Heart left ventricle (tissue), 16 donors: ENCODE measurements at regions of chr15 and their contacts with region 1.

Region 1: DNA sequence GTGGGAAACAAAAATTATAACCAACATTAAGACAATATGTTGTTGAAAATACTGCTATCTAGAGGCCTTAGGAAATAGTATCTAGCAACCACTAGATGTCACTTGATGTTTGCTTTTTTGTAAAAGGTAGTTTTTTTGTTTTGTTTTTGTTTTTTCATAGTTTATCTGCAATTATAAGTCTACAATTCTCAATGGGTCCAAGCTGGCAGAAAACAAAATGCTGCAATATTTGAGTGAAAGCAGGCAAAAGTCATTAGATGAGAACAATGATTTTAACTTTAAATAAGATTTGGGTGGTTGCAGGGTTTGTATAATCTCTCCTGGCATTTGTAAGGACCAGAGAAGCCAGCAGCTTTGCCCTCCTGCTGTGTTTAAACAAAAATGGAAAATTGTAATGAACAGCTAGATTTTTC is 27.0 kb downstream of the DUT start:
- DNase-seq: no peak
- ATAC-seq: peak in 1 of 4 donors; percentile 62
- H3K4me3 ChIP-seq: peak overlapping the region in 1 of 12 donors; percentile 3
- H3K27ac ChIP-seq: peak overlapping the region in 8 of 12 donors; percentile 3 to 53 (median 25)
- H3K4me1 ChIP-seq: peaks cover 0 to 20% (median 3%) of the 10 kb centered on the region in 12 donors
- H3K27me3 ChIP-seq: no peaks in the 10 kb centered on the region
- CTCF ChIP-seq: peak; percentile 38 to 75 (median 60)
- POLR2A ChIP-seq: no peak

Region 2: GRCh38 chr15:48221261-48221660 is 137.0 kb before region 1 on chr15:
- intact Hi-C with region 1: no loop called
- DNase-seq: no peak
- ATAC-seq: no peak
- H3K4me3 ChIP-seq: no peak overlapping the region
- H3K27ac ChIP-seq: no peak overlapping the region
- H3K4me1 ChIP-seq: no peaks in the 10 kb centered on the region
- H3K27me3 ChIP-seq: no peaks in the 10 kb centered on the region
- CTCF ChIP-seq: no peak
- POLR2A ChIP-seq: no peak

Region 3: GRCh38 chr15:48298914-48299313 is 59.3 kb before region 1 on chr15:
- intact Hi-C with region 1: no loop called
- DNase-seq: no peak
- ATAC-seq: no peak
- H3K4me3 ChIP-seq: no peak overlapping the region
- H3K27ac ChIP-seq: no peak overlapping the region
- H3K4me1 ChIP-seq: no peaks in the 10 kb centered on the region
- H3K27me3 ChIP-seq: no peaks in the 10 kb centered on the region
- CTCF ChIP-seq: no peak
- POLR2A ChIP-seq: no peak

Region 4: DNA sequence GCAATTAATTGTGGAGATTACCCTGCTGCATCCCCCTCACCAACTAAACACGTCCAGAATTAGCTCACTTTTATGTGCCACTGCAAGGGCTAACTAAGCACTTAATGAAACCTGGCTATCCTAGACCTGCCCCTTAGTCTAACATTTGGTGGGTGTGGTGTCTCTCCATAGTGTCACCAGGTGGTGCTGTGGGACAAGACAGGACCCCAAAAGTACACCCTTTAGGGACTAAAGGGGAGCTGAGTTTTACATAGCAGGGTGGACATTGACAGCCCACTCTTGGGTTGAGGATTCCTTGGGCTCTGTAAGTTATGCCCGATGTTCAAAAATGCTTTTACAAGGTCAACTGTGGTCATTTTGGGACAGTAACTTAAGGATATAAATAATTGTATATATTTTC is 21.3 kb before region 1 on chr15:
- intact Hi-C with region 1: no loop called
- DNase-seq: no peak
- ATAC-seq: no peak
- H3K4me3 ChIP-seq: no peak overlapping the region
- H3K27ac ChIP-seq: no peak overlapping the region
- H3K4me1 ChIP-seq: peaks cover 0 to 10% (median 7%) of the 10 kb centered on the region in 12 donors
- H3K27me3 ChIP-seq: no peaks in the 10 kb centered on the region
- CTCF ChIP-seq: peak in 5 of 12 donors; percentile 10 to 33 (median 24)
- POLR2A ChIP-seq: no peak

Region 5: GRCh38 chr15:48433226-48433886 is 75.1 kb after region 1 on chr15:
- intact Hi-C with region 1: no loop called
- DNase-seq: no peak
- ATAC-seq: no peak
- H3K4me3 ChIP-seq: no peak overlapping the region
- H3K27ac ChIP-seq: no peak overlapping the region
- H3K4me1 ChIP-seq: peaks cover 0 to 5% (median 0%) of the 10 kb centered on the region in 12 donors
- H3K27me3 ChIP-seq: no peaks in the 10 kb centered on the region
- CTCF ChIP-seq: no peak
- POLR2A ChIP-seq: no peak

Region 6: DNA sequence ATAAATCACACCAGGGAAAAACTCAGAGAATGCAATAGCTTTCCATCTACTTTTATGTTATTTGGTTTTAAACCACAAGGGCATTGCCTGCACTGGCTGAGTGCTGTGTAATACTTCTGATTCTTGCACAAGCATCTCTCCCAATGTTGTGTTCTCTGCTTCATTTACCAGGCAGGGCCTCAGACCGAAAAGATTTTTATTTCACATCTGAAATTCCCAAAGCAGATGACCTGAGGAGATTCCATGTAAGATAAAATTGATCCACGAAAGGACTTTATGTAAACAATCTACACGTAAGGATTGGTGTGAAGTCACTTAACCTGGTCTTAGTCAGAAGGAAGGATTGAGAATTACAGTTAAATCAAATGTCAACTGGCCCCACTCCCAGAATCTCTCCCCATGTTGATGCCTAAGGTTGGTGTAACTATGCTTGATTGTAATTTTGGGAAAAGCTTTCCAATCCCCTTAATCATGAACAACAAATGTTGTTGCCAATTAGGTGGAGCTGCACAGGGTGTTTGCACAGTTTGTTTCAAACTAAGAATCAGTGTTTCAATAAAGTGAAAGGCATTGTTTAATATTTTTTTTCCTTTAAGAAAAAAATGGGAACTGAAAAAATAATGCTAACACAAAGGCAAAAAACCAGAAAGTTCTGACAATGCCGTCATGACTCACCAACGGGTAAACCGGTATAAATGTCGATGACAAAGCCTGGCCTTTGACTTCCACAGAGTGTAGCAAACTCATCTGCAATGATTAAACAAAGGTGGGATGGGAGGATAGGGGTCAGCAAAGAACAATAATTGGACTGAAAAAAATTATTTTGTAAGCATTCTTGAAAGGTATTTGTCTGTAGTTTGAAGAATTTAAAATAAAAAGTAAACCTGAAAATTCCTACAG is 101.6 kb after region 1 on chr15:
- intact Hi-C with region 1: loop called in 1 of 10 experiments (anchors 10 kb)
- DNase-seq: no peak
- ATAC-seq: peak in 1 of 4 donors; percentile 38
- H3K4me3 ChIP-seq: no peak overlapping the region
- H3K27ac ChIP-seq: no peak overlapping the region
- H3K4me1 ChIP-seq: peaks cover 0 to 11% (median 0%) of the 10 kb centered on the region in 12 donors
- H3K27me3 ChIP-seq: no peaks in the 10 kb centered on the region
- CTCF ChIP-seq: no peak
- POLR2A ChIP-seq: no peak

Region 7: GRCh38 chr15:48582452-48583247 is 224.4 kb after region 1 on chr15:
- intact Hi-C with region 1: loop called in 1 of 10 experiments (anchors 10 kb)
- DNase-seq: peak in 1 of 5 donors; percentile 35
- ATAC-seq: peak in 1 of 4 donors; percentile 42
- H3K4me3 ChIP-seq: no peak overlapping the region
- H3K27ac ChIP-seq: peak overlapping the region in 3 of 12 donors; percentile 1 to 46 (median 22)
- H3K4me1 ChIP-seq: peaks cover 0 to 72% (median 15%) of the 10 kb centered on the region in 12 donors
- H3K27me3 ChIP-seq: no peaks in the 10 kb centered on the region
- CTCF ChIP-seq: no peak
- POLR2A ChIP-seq: no peak

Region 8: DNA sequence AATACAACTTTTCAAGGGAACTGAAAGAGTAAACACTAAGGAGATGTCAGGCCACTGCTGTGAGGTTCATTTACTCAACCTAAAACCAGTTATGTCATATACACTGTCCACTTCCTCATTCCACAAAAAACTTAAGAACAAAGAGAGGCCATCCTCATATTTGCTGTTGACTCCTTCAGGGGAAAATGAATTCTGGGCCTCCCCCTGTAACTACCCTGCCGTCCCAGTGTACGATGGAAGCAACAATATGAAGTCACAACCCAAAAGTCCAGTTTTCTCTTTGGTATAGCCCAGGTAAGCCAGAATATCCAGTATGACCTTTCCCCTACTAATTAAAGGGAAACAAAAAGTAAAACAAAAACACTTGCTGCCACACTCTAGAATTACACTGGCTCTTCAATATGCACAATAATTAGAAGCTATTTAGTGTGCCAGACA is 436.5 kb after region 1 on chr15:
- intact Hi-C with region 1: loop called in 2 of 10 experiments (anchors 2 to 5 kb)
- DNase-seq: no peak
- ATAC-seq: peak in 3 of 4 donors; percentile 52 to 60 (median 58)
- H3K4me3 ChIP-seq: peak overlapping the region in 3 of 12 donors; percentile 2 to 26 (median 7)
- H3K27ac ChIP-seq: peak overlapping the region in 3 of 12 donors; percentile 6 to 88 (median 16)
- H3K4me1 ChIP-seq: peaks cover 0 to 20% (median 0%) of the 10 kb centered on the region in 12 donors
- H3K27me3 ChIP-seq: no peaks in the 10 kb centered on the region
- CTCF ChIP-seq: no peak
- POLR2A ChIP-seq: no peak

Region 9: GRCh38 chr15:48855501-48856440 is 497.5 kb after region 1 on chr15:
- intact Hi-C with region 1: loop called in 1 of 10 experiments (anchors 5 kb)
- DNase-seq: no peak
- ATAC-seq: peak; percentile 70 to 87 (median 82)
- H3K4me3 ChIP-seq: no peak overlapping the region
- H3K27ac ChIP-seq: peak overlapping the region in 1 of 12 donors; percentile 4
- H3K4me1 ChIP-seq: peaks cover 0 to 11% (median 0%) of the 10 kb centered on the region in 12 donors
- H3K27me3 ChIP-seq: no peaks in the 10 kb centered on the region
- CTCF ChIP-seq: peak in 10 of 12 donors; percentile 12 to 54 (median 40)
- POLR2A ChIP-seq: no peak